Lower leg skin (tissue), 4 donors: ENCODE measurements at regions of chr20 and their contacts with region 1.

Region 1: GRCh38 chr20:2458919-2459499 is 11.6 kb downstream of the SNRPB start:
- DNase-seq: no peak
- H3K4me3 ChIP-seq: no peak overlapping the region
- CTCF ChIP-seq: no peak
- POLR2A ChIP-seq: no peak

Region 2: GRCh38 chr20:2206957-2207769 is 251.8 kb before region 1 on chr20:
- intact Hi-C with region 1: loop called (anchors 2 kb)
- DNase-seq: peak; percentile 34 to 92
- H3K4me3 ChIP-seq: peak overlapping the region; percentile 37
- CTCF ChIP-seq: no peak
- POLR2A ChIP-seq: no peak

Region 3: GRCh38 chr20:2320813-2321658 is 138.0 kb before region 1 on chr20:
- intact Hi-C with region 1: no loop called
- DNase-seq: no peak
- H3K4me3 ChIP-seq: no peak overlapping the region
- CTCF ChIP-seq: no peak
- POLR2A ChIP-seq: no peak

Region 4: DNA sequence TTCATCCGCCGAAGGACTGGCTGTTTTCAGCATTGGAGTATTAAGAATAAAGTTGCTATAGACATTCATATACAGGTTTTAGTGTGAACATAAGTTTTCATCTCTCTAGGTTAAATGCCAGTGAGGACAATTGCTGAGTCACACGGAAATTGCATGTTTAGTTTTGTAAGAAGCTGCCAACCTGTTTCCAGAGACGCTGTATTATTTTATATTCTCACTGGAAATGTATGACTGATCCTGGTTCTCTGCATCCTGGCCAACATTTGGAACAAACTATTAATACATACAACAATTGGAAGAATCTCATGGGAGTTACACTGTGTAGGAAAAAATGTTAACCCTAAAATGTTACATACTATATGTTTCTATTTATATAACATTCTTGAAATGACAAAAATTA is 95.0 kb before region 1 on chr20:
- intact Hi-C with region 1: no loop called
- DNase-seq: no peak
- H3K4me3 ChIP-seq: no peak overlapping the region
- CTCF ChIP-seq: no peak
- POLR2A ChIP-seq: no peak